CD4-positive, alpha-beta memory T cell (primary cell): ENCODE measurements at regions of chr1 and their contacts with region 1.

Region 1: GRCh38 chr1:67500413-67500959 is 70.3 kb upstream of the SERBP1 start:
- DNase-seq: peak; percentile 77 to 85 (median 81)
- H3K4me3 ChIP-seq: no peak overlapping the region
- H3K4me3 Mint-ChIP-seq: no peak overlapping the region
- H3K27ac ChIP-seq: no peak overlapping the region
- H3K27ac Mint-ChIP-seq: peak overlapping the region in 1 of 7 donors; percentile 29
- H3K4me1 ChIP-seq: peaks cover 2% of the 10 kb centered on the region
- H3K4me1 Mint-ChIP-seq: peaks cover 3 to 5% (median 4%) of the 10 kb centered on the region in 4 donors
- H3K27me3 ChIP-seq: no peaks in the 10 kb centered on the region
- H3K27me3 Mint-ChIP-seq: peaks cover 1 to 3% of the 10 kb centered on the region in 2 donors

Region 2: DNA sequence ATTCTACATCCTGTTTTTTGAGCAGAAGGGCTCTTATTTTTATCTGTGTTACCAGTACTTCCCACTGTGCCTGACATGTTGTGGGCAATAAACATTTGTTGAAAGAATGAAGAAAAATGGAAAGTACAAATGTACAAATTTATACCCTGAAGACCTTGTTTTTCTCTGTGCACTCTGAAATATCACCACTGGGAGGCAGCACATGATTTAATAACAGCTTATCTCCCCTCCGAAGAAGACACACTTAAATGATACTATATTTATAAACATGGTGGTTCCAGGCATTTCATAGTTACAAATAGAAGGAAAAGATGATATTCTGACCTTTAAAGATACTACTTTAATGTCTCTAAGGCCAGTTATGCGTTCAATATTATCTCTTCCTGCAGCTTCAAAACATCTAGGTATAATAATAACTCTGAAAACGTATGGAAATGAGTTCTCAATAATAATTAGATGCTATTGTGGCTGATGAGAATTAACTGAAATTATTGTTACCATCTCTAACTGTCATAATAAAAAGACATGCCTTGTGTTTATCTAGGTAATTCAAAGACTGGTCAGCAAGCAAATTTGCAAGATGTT is 735.4 kb before region 1 on chr1:
- CTCF ChIA-PET with region 1: interaction called, 12 read pairs
- POLR2A ChIA-PET with region 1: no interaction called
- intact Hi-C with region 1: loop called (anchors 1 kb)
- DNase-seq: peak; percentile 53 to 59 (median 54)
- H3K4me3 ChIP-seq: no peak overlapping the region
- H3K4me3 Mint-ChIP-seq: no peak overlapping the region
- H3K27ac ChIP-seq: no peak overlapping the region
- H3K27ac Mint-ChIP-seq: no peak overlapping the region
- H3K4me1 ChIP-seq: peaks cover 13% of the 10 kb centered on the region
- H3K4me1 Mint-ChIP-seq: peaks cover 13 to 17% (median 15%) of the 10 kb centered on the region in 4 donors
- H3K27me3 ChIP-seq: no peaks in the 10 kb centered on the region
- H3K27me3 Mint-ChIP-seq: no peaks in the 10 kb centered on the region

Region 3: DNA sequence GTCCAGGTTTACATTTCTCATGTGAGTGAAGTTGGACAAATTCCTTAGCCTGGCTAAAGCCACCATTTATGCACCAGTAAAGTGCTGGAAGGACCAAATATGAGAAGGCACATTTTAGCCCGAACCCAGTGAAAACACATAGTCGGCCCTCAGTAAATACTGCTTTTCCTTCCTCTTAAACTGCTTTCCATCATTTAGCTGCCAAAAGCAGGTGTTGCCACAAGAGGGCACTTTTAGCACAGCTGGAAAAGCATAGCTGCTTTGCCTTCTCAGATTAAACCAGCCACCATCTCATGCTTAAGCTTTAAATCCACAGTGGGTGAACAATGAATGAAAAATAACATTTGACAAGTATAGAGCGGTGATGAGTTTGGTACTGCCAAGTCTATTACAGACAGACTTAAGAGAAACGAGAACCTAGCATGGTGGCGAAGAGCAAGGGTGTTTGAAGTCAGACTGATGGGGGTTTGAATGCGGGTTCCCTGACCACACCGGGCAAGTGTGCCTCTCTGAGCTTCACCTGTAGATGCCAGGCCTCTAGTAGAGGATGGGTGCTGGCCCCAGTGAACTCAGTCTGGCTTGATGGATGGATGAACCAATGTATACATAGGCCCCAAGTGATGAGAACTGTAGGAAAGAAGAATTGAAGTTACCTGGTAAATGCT is 504.3 kb before region 1 on chr1:
- CTCF ChIA-PET with region 1: interaction called, 4 read pairs
- POLR2A ChIA-PET with region 1: no interaction called
- intact Hi-C with region 1: loop called (anchors 2 kb)
- DNase-seq: peak; percentile 50 to 63 (median 60)
- H3K4me3 ChIP-seq: no peak overlapping the region
- H3K4me3 Mint-ChIP-seq: no peak overlapping the region
- H3K27ac ChIP-seq: no peak overlapping the region
- H3K27ac Mint-ChIP-seq: peak overlapping the region in 1 of 7 donors; percentile 30
- H3K4me1 ChIP-seq: peaks cover 14% of the 10 kb centered on the region
- H3K4me1 Mint-ChIP-seq: peaks cover 10 to 21% (median 19%) of the 10 kb centered on the region in 4 donors
- H3K27me3 ChIP-seq: no peaks in the 10 kb centered on the region
- H3K27me3 Mint-ChIP-seq: no peaks in the 10 kb centered on the region

Region 4: GRCh38 chr1:67236277-67236676 is 264.2 kb before region 1 on chr1:
- CTCF ChIA-PET with region 1: interaction called, 64 read pairs
- POLR2A ChIA-PET with region 1: interaction called, 3 read pairs
- intact Hi-C with region 1: loop called (anchors 1 kb)
- DNase-seq: no peak
- H3K4me3 ChIP-seq: no peak overlapping the region
- H3K4me3 Mint-ChIP-seq: no peak overlapping the region
- H3K27ac ChIP-seq: no peak overlapping the region
- H3K27ac Mint-ChIP-seq: no peak overlapping the region
- H3K4me1 ChIP-seq: no peaks in the 10 kb centered on the region
- H3K4me1 Mint-ChIP-seq: no peaks in the 10 kb centered on the region
- H3K27me3 ChIP-seq: no peaks in the 10 kb centered on the region
- H3K27me3 Mint-ChIP-seq: no peaks in the 10 kb centered on the region

Region 5: DNA sequence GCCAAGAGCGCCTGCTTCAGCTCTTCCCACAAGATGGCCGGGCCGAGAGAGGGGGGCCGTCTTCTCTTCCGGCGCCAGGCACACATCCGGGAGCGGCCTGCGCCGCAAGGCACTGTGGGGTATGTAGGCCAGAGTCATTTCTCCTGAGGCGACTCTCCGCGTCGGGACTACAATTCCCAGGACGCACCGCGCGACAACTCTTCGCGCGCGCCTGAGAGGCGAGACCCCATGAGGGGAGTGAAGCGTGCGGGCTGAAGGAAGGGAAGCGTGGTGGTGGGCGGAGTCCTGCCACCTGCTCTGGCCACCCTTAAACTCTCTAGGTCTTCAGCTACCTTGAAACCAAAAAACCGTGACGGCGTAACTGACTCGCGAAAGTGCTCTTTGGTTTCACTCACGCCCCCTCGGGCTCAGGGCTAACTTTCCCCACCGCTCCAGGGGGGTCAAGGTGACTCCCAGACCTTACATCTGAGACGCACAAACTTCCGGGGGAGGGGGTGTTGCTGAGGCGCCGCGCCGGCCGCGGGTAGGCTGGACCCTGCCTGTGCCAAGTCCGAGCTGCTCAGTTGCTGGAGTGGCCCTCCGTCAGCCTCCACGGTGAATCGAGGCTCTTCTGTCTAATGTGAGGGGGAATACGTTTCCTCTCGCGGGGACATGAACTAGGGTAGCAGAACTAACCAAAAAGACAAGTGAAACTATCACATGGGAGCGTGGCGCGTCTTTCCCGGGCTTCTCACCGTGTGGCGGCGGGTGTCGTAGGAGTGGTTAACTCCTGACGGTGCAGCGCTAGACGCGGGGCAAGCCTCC is 69.9 kb before region 1 on chr1 and contains the start of gene SERBP1:
- CTCF ChIA-PET with region 1: interaction called, 7 read pairs
- POLR2A ChIA-PET with region 1: no interaction called
- intact Hi-C with region 1: loop called (anchors 2 kb)
- DNase-seq: peak; percentile 94 to 97 (median 96)
- H3K4me3 ChIP-seq: peak within 1 kb of the TSS; percentile 87 to 91
- H3K4me3 Mint-ChIP-seq: peak within 1 kb of the TSS; percentile 92 to 99 (median 95)
- H3K27ac ChIP-seq: peak within 1 kb of the TSS; percentile 88
- H3K27ac Mint-ChIP-seq: peak within 1 kb of the TSS; percentile 96 to 99 (median 98)
- H3K4me1 ChIP-seq: peaks cover 36% of the 10 kb centered on the region
- H3K4me1 Mint-ChIP-seq: peaks cover 29 to 57% (median 34%) of the 10 kb centered on the region in 4 donors
- H3K27me3 ChIP-seq: no peaks in the 10 kb centered on the region
- H3K27me3 Mint-ChIP-seq: no peaks in the 10 kb centered on the region
- total RNA-seq, gene SERBP1: 148 to 154 TPM

Region 6: GRCh38 chr1:67515324-67516080 is 15.0 kb after region 1 on chr1:
- CTCF ChIA-PET with region 1: interaction called, 12 read pairs
- POLR2A ChIA-PET with region 1: no interaction called
- intact Hi-C with region 1: no loop called
- DNase-seq: no peak
- H3K4me3 ChIP-seq: no peak overlapping the region
- H3K4me3 Mint-ChIP-seq: no peak overlapping the region
- H3K27ac ChIP-seq: no peak overlapping the region
- H3K27ac Mint-ChIP-seq: peak overlapping the region in 1 of 7 donors; percentile 36
- H3K4me1 ChIP-seq: no peaks in the 10 kb centered on the region
- H3K4me1 Mint-ChIP-seq: no peaks in the 10 kb centered on the region
- H3K27me3 ChIP-seq: no peaks in the 10 kb centered on the region
- H3K27me3 Mint-ChIP-seq: peaks cover 4 to 8% of the 10 kb centered on the region in 2 donors